Ascending aorta (tissue), 2 donors: ENCODE measurements at regions of chrX and their contacts with region 1.

Region 1: DNA sequence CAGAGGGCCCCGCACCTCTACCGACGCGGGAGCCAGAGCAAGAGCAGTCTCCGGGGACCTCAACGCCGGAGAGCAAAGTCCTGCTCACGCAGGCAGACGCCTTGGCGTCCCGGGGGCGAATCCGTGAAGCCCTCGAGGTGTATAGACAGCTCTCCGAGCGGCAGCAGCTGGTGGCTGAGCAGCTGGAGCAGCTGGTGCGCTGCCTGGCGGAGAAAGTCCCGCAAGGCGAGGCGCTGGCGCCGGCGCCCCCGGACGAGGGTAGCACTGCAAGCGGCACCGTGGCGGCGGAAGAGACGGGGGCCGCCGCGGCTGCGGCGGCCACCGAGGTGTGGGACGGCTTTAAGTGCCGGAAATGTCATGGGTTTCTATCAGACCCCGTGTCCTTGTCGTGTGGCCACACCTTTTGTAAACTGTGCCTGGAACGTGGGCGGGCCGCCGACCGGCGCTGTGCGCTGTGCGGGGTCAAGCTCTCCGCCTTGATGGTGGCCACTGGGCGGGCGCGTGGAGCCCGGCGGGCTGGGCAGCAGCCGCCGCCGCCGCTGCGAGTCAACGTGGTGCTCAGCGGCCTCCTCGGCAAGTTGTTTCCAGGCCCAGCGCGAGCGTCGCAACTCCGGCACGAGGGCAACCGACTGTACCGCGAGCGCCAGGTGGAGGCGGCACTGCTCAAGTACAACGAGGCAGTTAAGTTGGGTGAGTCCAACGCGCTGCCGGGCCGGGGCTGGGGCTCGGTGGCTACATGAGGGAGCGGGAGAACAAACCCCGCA is 672 bp downstream of the LONRF3 start:
- DNase-seq: peak in 1 of 2 donors; percentile 66
- H3K4me3 ChIP-seq: peak overlapping the region; percentile 77 to 83
- H3K27ac ChIP-seq: peak overlapping the region; percentile 76 to 87
- H3K4me1 ChIP-seq: no peaks in the 10 kb centered on the region
- H3K27me3 ChIP-seq: no peaks in the 10 kb centered on the region
- CTCF ChIP-seq: no peak

Region 2: DNA sequence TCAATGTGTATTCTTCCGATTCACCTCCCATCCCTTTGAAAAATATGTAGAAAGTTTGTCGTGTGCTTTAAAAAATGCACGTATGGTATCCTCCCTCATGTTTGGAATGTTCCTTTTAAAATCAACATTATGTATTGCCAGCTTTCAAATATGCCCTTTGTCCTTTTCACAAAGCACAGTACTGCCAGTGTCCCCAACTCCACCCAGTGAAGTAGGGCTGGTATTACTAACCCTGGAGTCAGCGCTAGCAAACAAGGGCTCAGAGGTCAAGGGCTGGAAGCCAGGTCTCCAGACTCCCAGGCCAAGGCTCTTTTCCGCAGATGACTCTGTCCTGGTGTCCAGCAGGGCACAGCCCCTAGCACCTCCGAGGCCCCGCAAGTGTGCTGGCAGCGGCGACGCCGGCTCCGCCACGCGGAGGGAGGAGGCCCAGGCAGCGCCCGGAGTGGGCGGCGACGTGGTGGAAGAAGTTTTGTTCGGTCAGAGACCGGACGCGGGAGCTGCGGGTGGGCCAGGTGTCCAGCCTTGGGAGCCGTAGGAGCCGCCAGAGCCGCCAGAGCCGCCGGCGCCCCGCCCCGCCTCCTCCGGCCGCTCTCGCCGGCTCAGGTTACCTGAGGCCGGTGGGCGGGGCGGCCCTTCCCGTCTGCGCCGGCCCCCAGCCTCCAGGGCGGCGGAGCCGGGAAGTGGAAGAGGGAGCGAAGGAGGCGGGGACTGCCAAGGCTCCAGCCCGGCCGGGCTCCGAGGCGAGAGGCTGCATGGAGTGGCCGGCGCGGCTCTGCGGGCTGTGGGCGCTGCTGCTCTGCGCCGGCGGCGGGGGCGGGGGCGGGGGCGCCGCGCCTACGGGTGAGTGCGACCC is 248.0 kb before region 1 on chrX and contains the start of gene IL13RA1:
- intact Hi-C with region 1: loop called (anchors 5 kb)
- DNase-seq: peak; percentile 40 to 90
- H3K4me3 ChIP-seq: peak within 1 kb of the TSS; percentile 65 to 76
- H3K27ac ChIP-seq: peak within 1 kb of the TSS; percentile 91 to 92
- H3K4me1 ChIP-seq: peaks cover 0 to 3% of the 10 kb centered on the region in 2 donors
- H3K27me3 ChIP-seq: no peaks in the 10 kb centered on the region
- CTCF ChIP-seq: no peak
- total RNA-seq, gene IL13RA1: 29.6 TPM